Natural killer cell (primary cell): ENCODE measurements at regions of chr5 and their contacts with region 1.

Region 1: DNA sequence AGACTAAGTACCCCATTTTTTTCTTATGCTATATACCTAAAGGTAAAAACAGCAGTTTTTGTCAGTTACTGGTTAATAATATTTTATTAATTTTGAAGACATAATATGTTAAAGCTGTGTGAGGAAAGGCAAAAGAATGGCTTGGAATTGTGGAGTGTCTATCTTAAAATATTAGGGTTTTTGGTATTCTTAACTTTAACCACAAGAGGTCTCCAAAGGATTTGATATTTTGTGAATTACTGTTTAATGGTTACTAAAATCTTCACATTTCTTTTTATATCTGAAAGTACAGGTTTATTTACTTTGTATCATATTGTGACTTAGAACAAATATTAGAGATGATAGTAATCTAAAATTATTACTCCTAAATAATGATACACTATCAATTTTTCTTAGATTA is 32.0 kb upstream of the DHFR start:
- DNase-seq: peak in 1 of 2 donors; percentile 52
- ATAC-seq: peak in 1 of 3 donors; percentile 44
- H3K4me3 ChIP-seq: no peak overlapping the region
- H3K4me3 Mint-ChIP-seq: no peak overlapping the region
- H3K27ac ChIP-seq: no peak overlapping the region
- H3K27ac Mint-ChIP-seq: peak overlapping the region in 1 of 2 donors; percentile 1
- H3K4me1 ChIP-seq: no peaks in the 10 kb centered on the region
- H3K4me1 Mint-ChIP-seq: peaks cover 17 to 21% of the 10 kb centered on the region in 2 donors
- H3K27me3 ChIP-seq: no peaks in the 10 kb centered on the region
- H3K27me3 Mint-ChIP-seq: no peaks in the 10 kb centered on the region
- CTCF ChIP-seq: peak; percentile 69

Region 2: DNA sequence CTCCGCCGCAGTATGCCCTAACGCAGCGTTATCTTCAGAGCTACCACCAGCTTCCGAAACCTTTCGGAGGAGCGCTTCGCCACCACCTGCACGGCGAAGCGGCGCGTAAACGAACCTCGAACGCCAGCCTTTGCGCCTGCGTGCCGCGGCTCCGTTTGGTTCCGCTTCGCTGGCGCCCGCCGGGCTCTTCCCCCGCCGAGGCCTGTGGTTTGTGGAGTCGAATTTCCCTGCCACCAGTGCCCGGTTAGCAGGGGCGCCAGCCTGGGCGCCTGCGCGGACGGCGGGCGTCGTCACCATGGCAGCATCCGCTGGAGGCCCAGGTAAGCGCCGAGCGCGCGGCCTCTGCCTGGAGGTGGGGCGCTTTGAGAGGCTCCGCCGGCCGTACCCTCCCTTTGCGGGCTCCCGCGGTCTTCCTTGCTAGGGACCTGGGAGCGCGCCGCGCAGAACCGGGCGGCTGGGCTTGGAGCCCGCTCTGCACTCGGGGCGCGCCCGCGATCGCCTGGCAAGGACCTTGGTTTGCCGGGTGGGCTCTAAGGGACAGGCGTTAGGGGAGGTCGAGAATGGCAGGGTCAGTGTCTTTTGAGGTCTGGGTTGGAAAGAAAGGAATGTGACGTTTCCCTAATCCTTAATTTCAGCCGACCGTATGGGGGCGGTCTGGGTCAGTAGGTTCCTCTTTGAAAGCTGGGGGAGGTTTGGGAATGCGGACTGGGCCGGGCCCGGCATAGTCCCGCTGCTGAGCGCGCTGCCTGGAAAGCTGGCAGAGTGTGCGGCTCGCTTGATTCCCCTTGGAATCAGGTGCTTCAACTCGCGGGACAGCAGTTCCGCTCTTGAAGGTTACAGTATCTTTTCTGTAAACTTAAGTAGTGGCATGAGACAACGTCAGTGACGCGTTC is 198.7 kb before region 1 on chr5 and contains the start of gene FAM151B:
- intact Hi-C with region 1: no loop called
- DNase-seq: peak in 1 of 2 donors; percentile 84
- ATAC-seq: peak; percentile 18 to 64 (median 62)
- H3K4me3 ChIP-seq: peak within 1 kb of the TSS; percentile 19
- H3K4me3 Mint-ChIP-seq: peak within 1 kb of the TSS; percentile 66
- H3K27ac ChIP-seq: no peak within 1 kb of the TSS
- H3K27ac Mint-ChIP-seq: no peak within 1 kb of the TSS
- H3K4me1 ChIP-seq: peaks cover 12% of the 10 kb centered on the region
- H3K4me1 Mint-ChIP-seq: peaks cover 9 to 12% of the 10 kb centered on the region in 2 donors
- H3K27me3 ChIP-seq: peaks cover 8% of the 10 kb centered on the region
- H3K27me3 Mint-ChIP-seq: peaks cover 24 to 40% of the 10 kb centered on the region in 2 donors
- CTCF ChIP-seq: no peak
- total RNA-seq, gene FAM151B: 0.21 to 0.45 (median 0.43) TPM

Region 3: DNA sequence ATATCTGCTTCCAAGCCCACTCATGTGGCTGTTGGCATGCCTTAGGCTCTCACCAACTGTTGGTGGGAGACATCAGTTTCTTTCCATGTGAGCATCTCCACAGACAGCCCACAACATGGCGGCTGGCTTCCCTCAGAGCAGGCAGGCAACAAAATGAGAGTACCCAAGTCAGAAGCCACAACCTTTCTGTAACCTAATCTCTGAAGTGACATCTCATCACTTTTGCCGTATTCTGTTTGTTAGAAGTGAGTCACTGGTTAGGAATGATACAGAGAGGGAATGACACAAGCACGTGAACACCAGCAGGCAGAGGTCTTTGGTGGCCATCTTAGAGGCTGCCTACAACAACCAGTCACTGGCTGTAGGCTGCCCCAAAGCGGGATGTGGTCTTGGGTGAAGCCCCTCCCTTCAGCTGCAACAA is 184.8 kb after region 1 on chr5:
- intact Hi-C with region 1: no loop called
- DNase-seq: no peak
- ATAC-seq: no peak
- H3K4me3 ChIP-seq: no peak overlapping the region
- H3K4me3 Mint-ChIP-seq: no peak overlapping the region
- H3K27ac ChIP-seq: no peak overlapping the region
- H3K27ac Mint-ChIP-seq: no peak overlapping the region
- H3K4me1 ChIP-seq: no peaks in the 10 kb centered on the region
- H3K4me1 Mint-ChIP-seq: no peaks in the 10 kb centered on the region
- H3K27me3 ChIP-seq: no peaks in the 10 kb centered on the region
- H3K27me3 Mint-ChIP-seq: no peaks in the 10 kb centered on the region
- CTCF ChIP-seq: no peak

Region 4: DNA sequence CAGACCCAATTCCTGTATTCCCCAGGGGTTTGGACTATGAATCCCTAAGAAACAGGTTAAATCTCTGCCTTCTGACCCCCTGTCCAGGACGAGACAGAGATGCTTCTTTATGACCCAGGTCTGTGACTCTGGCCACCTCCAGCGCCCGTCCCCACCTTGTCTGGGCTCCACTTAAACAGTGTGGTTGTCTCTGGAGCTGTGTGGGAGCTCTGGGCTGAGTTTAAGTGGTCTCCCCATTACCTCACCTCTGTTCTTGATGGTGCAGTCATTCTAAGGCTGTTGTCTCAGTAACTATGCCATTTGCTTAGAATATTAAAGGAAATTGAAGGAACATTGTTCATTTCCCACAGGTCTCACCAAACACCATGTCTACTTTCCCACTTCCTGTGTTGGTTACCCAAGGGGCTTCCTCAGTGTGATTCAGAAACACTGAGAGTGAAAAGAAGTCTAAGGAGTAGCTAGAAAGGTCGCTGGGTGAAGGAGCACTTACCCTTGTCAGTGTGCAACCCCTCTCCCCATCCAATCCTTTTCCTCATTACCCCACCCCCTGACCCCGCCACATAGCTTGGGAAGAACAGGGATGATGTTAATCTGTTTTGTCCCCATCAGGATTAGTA is 418.6 kb after region 1 on chr5:
- intact Hi-C with region 1: loop called (anchors 1 kb)
- DNase-seq: no peak
- ATAC-seq: peak in 1 of 3 donors; percentile 24
- H3K4me3 ChIP-seq: no peak overlapping the region
- H3K4me3 Mint-ChIP-seq: no peak overlapping the region
- H3K27ac ChIP-seq: no peak overlapping the region
- H3K27ac Mint-ChIP-seq: no peak overlapping the region
- H3K4me1 ChIP-seq: peaks cover 9% of the 10 kb centered on the region
- H3K4me1 Mint-ChIP-seq: peaks cover 20 to 25% of the 10 kb centered on the region in 2 donors
- H3K27me3 ChIP-seq: no peaks in the 10 kb centered on the region
- H3K27me3 Mint-ChIP-seq: no peaks in the 10 kb centered on the region
- CTCF ChIP-seq: no peak

Region 5: DNA sequence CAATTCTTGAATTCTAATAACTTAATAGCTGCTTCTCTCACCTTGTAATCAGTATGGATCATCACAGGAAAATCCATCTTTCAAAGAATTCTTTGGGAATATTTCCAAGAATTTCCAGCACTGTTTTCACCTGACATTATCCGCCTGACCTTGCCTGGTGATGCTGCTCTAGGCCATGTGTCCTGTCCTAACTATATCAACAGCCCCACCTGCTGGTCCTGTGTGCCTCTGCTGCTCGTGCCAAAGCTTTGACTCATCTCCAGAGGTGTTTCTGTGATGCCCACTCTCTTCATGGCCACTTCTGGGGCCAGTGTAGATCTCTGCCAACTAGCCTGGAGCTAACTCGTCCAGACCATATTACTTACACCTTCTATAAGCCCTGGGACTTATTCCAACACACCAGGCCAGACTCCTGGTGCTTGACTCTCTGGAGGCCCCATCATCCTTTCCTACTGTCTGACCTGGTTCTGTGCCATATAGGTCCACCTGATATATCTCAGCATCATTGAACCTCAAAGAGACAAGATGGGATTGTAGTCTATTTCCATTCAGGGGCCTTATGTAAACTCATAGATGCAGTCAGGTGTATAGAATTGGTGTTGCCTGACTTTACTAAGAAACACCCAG is 478.8 kb after region 1 on chr5:
- intact Hi-C with region 1: loop called (anchors 1 kb)
- DNase-seq: peak; percentile 31 to 72
- ATAC-seq: peak; percentile 48 to 82 (median 72)
- H3K4me3 ChIP-seq: no peak overlapping the region
- H3K4me3 Mint-ChIP-seq: no peak overlapping the region
- H3K27ac ChIP-seq: no peak overlapping the region
- H3K27ac Mint-ChIP-seq: no peak overlapping the region
- H3K4me1 ChIP-seq: no peaks in the 10 kb centered on the region
- H3K4me1 Mint-ChIP-seq: peaks cover 0 to 7% of the 10 kb centered on the region in 2 donors
- H3K27me3 ChIP-seq: no peaks in the 10 kb centered on the region
- H3K27me3 Mint-ChIP-seq: peaks cover 0 to 11% of the 10 kb centered on the region in 2 donors
- CTCF ChIP-seq: peak; percentile 42

Region 6: GRCh38 chr5:81194633-81195333 is 508.0 kb after region 1 on chr5:
- intact Hi-C with region 1: loop called (anchors 1 kb)
- DNase-seq: peak; percentile 72 to 86
- ATAC-seq: peak; percentile 89 to 99 (median 99)
- H3K4me3 ChIP-seq: no peak overlapping the region
- H3K4me3 Mint-ChIP-seq: peak overlapping the region; percentile 72
- H3K27ac ChIP-seq: no peak overlapping the region
- H3K27ac Mint-ChIP-seq: peak overlapping the region in 1 of 2 donors; percentile 66
- H3K4me1 ChIP-seq: peaks cover 6% of the 10 kb centered on the region
- H3K4me1 Mint-ChIP-seq: peaks cover 7 to 9% of the 10 kb centered on the region in 2 donors
- H3K27me3 ChIP-seq: peaks cover 3% of the 10 kb centered on the region
- H3K27me3 Mint-ChIP-seq: peaks cover 5 to 16% of the 10 kb centered on the region in 2 donors
- CTCF ChIP-seq: peak; percentile 90

Region 7: DNA sequence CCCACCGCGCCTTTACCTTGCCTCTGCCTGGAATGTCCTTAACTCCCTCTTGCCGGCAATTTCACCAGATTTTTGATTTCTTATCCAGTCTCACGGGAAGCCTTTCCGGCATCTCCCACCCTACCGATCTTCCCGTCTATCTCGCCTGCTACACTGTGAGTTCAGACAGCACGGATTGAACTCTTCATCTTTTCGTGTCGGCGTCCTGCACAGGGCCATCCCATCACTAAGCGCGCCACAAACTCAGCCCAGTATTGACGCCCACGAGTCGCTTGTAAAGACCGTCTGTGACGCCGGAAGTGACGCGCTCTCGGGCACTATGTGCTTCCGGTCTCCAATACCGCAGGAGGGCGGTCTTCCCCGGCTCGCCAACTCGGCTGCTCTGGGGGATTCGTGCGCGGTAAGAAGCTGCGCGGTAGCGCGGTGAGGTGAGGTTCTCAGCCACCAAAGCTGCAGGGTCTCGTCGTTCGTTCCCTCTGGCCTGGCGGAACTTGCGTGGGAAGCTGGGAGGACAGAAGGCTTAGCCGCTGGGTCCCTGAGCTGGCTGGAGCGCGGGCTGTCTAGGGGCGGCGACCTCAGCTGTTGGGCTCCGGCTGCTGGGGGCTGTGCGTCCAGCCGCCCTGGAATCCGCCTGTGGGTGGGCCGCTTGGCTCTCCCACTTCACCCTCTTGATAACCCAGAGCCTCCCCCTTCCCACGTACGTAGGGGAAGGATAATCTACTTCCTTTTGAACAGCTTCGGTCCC is 614.7 kb after region 1 on chr5 and contains the start of gene ZCCHC9:
- intact Hi-C with region 1: loop called (anchors 5 kb)
- DNase-seq: peak; percentile 90 to 98
- ATAC-seq: peak; percentile 91 to 96 (median 94)
- H3K4me3 ChIP-seq: peak within 1 kb of the TSS; percentile 79
- H3K4me3 Mint-ChIP-seq: peak within 1 kb of the TSS; percentile 99
- H3K27ac ChIP-seq: peak within 1 kb of the TSS; percentile 81
- H3K27ac Mint-ChIP-seq: peak within 1 kb of the TSS; percentile 97 to 99
- H3K4me1 ChIP-seq: peaks cover 22% of the 10 kb centered on the region
- H3K4me1 Mint-ChIP-seq: peaks cover 27 to 37% of the 10 kb centered on the region in 2 donors
- H3K27me3 ChIP-seq: no peaks in the 10 kb centered on the region
- H3K27me3 Mint-ChIP-seq: no peaks in the 10 kb centered on the region
- CTCF ChIP-seq: no peak
- total RNA-seq, gene ZCCHC9: 9.4 to 10.8 (median 9.8) TPM